BJ (cell line): ENCODE measurements at regions of chr12 and their contacts with region 1.

Region 1: GRCh38 chr12:68440068-68440581 is 108.0 kb upstream of the MDM1 start:
- DNase-seq: no peak
- H3K4me3 ChIP-seq: no peak overlapping the region
- H3K27me3 ChIP-seq: no peaks in the 10 kb centered on the region
- CTCF ChIP-seq: no peak

Region 2: DNA sequence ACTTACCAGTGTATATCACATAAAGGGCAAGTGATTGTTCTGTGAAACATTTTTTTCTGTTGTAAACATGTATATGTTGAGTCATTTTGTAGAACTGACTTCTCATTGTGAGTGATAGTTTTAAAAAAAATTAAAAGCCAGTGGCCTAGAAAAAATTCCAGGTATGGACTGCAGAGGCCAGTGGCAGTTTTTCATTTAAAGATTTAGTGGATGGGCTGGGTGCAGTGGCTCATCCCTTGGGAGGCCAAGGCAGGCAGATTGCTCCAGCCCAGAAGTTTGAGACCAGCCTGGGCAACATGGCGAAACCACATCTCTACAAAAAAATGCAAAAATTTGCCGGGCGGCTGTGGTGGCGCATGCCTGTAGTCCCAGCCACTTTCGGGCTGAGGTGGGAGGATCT is 23.3 kb before region 1 on chr12:
- CTCF ChIA-PET with region 1: no interaction called
- POLR2A ChIA-PET with region 1: interaction called, 11 read pairs
- DNase-seq: no peak
- H3K4me3 ChIP-seq: no peak overlapping the region
- H3K27me3 ChIP-seq: no peaks in the 10 kb centered on the region
- CTCF ChIP-seq: no peak

Region 3: GRCh38 chr12:68614105-68614679 is 174.1 kb after region 1 on chr12:
- CTCF ChIA-PET with region 1: no interaction called
- POLR2A ChIA-PET with region 1: interaction called, 15 read pairs
- DNase-seq: no peak
- H3K4me3 ChIP-seq: peak overlapping the region; percentile 16; the same call in 1 of the 2 replicates
- H3K27me3 ChIP-seq: no peaks in the 10 kb centered on the region
- CTCF ChIP-seq: no peak